CD8-positive, alpha-beta T cell (primary cell): ENCODE measurements at regions of chr11 and their contacts with region 1.

Region 1: DNA sequence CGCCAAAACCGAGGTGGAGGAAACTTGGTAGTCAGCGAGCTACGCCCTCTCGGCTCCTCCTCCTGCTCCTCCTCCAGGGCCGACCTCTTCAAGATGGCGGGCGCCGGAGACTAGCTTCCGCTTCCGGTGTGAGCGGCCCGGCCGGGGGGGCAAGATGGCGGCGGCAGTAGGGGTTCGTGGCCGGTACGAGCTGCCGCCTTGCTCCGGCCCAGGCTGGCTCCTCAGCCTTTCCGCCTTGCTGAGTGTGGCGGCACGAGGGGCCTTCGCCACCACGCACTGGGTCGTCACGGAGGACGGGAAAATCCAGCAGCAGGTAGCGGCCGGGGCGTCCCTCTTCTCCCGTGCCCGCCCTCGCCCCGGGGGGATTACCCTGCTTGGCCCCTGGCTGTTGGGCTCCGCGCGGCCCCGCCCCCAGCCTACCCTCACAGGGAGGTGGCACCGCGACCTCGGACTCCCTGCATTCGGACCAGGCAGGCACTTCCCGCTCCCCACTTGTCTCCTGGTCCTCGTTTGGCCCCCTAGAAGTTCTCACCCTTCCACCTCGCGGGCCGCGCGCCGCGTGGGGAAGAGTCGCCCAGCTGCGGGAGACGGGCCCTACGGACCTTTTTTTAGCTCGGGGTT is at the start of gene TTC17:
- DNase-seq: peak; percentile 83 to 96 (median 92)
- ATAC-seq: peak; percentile 94
- H3K4me3 ChIP-seq: peak within 1 kb of the TSS; percentile 84 to 93
- H3K4me3 Mint-ChIP-seq: peak within 1 kb of the TSS; percentile 99
- H3K27ac ChIP-seq: peak within 1 kb of the TSS; percentile 87 to 92
- H3K27ac Mint-ChIP-seq: peak within 1 kb of the TSS; percentile 98
- H3K4me1 ChIP-seq: peaks cover 17% of the 10 kb centered on the region
- H3K4me1 Mint-ChIP-seq: peaks cover 47% of the 10 kb centered on the region
- H3K27me3 ChIP-seq: no peaks in the 10 kb centered on the region
- H3K27me3 Mint-ChIP-seq: no peaks in the 10 kb centered on the region
- CTCF ChIP-seq: no peak
- total RNA-seq, gene TTC17: 84.0 to 85.6 TPM

Region 2: DNA sequence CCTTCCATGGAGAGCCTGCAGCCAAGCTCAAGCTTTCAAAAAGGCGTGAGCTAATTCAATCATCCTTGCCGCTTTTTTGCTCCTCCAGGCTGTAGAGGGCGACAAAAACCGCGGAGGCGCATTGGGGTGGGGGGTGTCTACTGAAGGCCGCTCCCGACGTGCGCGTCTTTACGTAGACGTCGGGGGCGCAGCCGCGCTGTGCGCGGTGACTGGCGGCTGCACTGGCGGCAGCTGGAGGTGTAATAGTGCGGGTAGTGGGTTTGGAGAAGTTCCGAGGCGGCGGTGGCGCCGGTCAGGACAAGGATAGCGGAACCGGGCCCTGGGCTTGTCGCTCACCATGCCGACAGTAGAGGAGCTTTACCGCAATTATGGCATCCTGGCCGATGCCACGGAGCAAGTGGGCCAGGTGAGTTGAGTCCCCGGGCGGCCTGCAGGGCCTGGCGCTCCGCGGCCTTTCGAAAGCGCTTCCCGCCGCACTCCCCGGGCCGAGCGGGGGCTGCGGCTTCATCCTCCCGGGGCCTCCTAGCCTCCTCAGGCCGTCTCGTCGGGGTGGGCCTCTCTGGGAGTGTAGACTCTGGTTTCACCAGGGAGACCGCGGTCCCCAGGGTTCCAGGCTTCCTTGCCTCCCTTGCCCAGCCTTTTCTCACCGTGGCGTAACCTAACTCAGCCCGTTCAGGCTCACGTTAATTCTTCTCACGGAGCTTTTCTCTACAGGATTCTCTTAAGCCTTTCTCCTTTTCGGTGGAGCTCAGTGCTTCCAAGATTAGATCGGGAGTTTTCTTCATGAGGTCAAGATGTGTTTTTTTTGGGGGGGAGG is 46.9 kb before region 1 on chr11 and contains the start of gene API5:
- CTCF ChIA-PET with region 1: interaction called, 8 read pairs
- POLR2A ChIA-PET with region 1: interaction called, 30 read pairs
- intact Hi-C with region 1: loop called (anchors 1 kb)
- DNase-seq: peak; percentile 84 to 96 (median 93)
- ATAC-seq: peak; percentile 94
- H3K4me3 ChIP-seq: peak within 1 kb of the TSS; percentile 84 to 85
- H3K4me3 Mint-ChIP-seq: peak within 1 kb of the TSS; percentile 92
- H3K27ac ChIP-seq: peak within 1 kb of the TSS; percentile 64 to 75
- H3K27ac Mint-ChIP-seq: peak within 1 kb of the TSS; percentile 88
- H3K4me1 ChIP-seq: peaks cover 34% of the 10 kb centered on the region
- H3K4me1 Mint-ChIP-seq: peaks cover 50% of the 10 kb centered on the region
- H3K27me3 ChIP-seq: no peaks in the 10 kb centered on the region
- H3K27me3 Mint-ChIP-seq: no peaks in the 10 kb centered on the region
- CTCF ChIP-seq: peak; percentile 63
- total RNA-seq, gene API5: 78.4 to 80.6 TPM

Region 3: GRCh38 chr11:43643898-43644620 is 285.1 kb after region 1 on chr11:
- CTCF ChIA-PET with region 1: no interaction called
- POLR2A ChIA-PET with region 1: no interaction called
- intact Hi-C with region 1: loop called (anchors 1 to 5 kb)
- DNase-seq: peak; percentile 72 to 91 (median 85)
- ATAC-seq: peak; percentile 99
- H3K4me3 ChIP-seq: peak overlapping the region; percentile 73 to 76
- H3K4me3 Mint-ChIP-seq: peak overlapping the region; percentile 84
- H3K27ac ChIP-seq: peak overlapping the region; percentile 52 to 66
- H3K27ac Mint-ChIP-seq: peak overlapping the region; percentile 91
- H3K4me1 ChIP-seq: peaks cover 8% of the 10 kb centered on the region
- H3K4me1 Mint-ChIP-seq: peaks cover 26% of the 10 kb centered on the region
- H3K27me3 ChIP-seq: no peaks in the 10 kb centered on the region
- H3K27me3 Mint-ChIP-seq: peaks cover 15% of the 10 kb centered on the region
- CTCF ChIP-seq: no peak

Region 4: GRCh38 chr11:43680521-43681400 is 321.9 kb after region 1 on chr11 and contains the start of gene HSD17B12:
- CTCF ChIA-PET with region 1: no interaction called
- POLR2A ChIA-PET with region 1: interaction called, 3 read pairs
- intact Hi-C with region 1: loop called (anchors 1 to 2 kb)
- DNase-seq: peak; percentile 98 to 100 (median 98)
- ATAC-seq: peak; percentile 94
- H3K4me3 ChIP-seq: peak within 1 kb of the TSS; percentile 84
- H3K4me3 Mint-ChIP-seq: peak within 1 kb of the TSS; percentile 89
- H3K27ac ChIP-seq: peak within 1 kb of the TSS; percentile 91 to 92
- H3K27ac Mint-ChIP-seq: peak within 1 kb of the TSS; percentile 98
- H3K4me1 ChIP-seq: peaks cover 15% of the 10 kb centered on the region
- H3K4me1 Mint-ChIP-seq: peaks cover 32% of the 10 kb centered on the region
- H3K27me3 ChIP-seq: no peaks in the 10 kb centered on the region
- H3K27me3 Mint-ChIP-seq: no peaks in the 10 kb centered on the region
- CTCF ChIP-seq: no peak
- total RNA-seq, gene HSD17B12: 13.8 to 14.0 TPM

Region 5: GRCh38 chr11:43694477-43694876 is 335.6 kb after region 1 on chr11:
- CTCF ChIA-PET with region 1: no interaction called
- POLR2A ChIA-PET with region 1: no interaction called
- intact Hi-C with region 1: no loop called
- DNase-seq: no peak
- ATAC-seq: no peak
- H3K4me3 ChIP-seq: no peak overlapping the region
- H3K4me3 Mint-ChIP-seq: no peak overlapping the region
- H3K27ac ChIP-seq: no peak overlapping the region
- H3K27ac Mint-ChIP-seq: no peak overlapping the region
- H3K4me1 ChIP-seq: no peaks in the 10 kb centered on the region
- H3K4me1 Mint-ChIP-seq: peaks cover 23% of the 10 kb centered on the region
- H3K27me3 ChIP-seq: no peaks in the 10 kb centered on the region
- H3K27me3 Mint-ChIP-seq: no peaks in the 10 kb centered on the region
- CTCF ChIP-seq: no peak

Region 6: GRCh38 chr11:45339729-45340519 is 1981.0 kb after region 1 on chr11:
- CTCF ChIA-PET with region 1: no interaction called
- POLR2A ChIA-PET with region 1: no interaction called
- intact Hi-C with region 1: loop called in 1 of 2 experiments (anchors 5 kb)
- DNase-seq: peak; percentile 81 to 96 (median 92)
- ATAC-seq: peak; percentile 100
- H3K4me3 ChIP-seq: peak overlapping the region in 1 of 2 experiments; percentile 27
- H3K4me3 Mint-ChIP-seq: peak overlapping the region; percentile 60
- H3K27ac ChIP-seq: no peak overlapping the region
- H3K27ac Mint-ChIP-seq: no peak overlapping the region
- H3K4me1 ChIP-seq: peaks cover 8% of the 10 kb centered on the region
- H3K4me1 Mint-ChIP-seq: peaks cover 10% of the 10 kb centered on the region
- H3K27me3 ChIP-seq: peaks cover 0 to 4% of the 10 kb centered on the region in 2 experiments
- H3K27me3 Mint-ChIP-seq: peaks cover 10% of the 10 kb centered on the region
- CTCF ChIP-seq: peak; percentile 87

Region 7: GRCh38 chr11:45354976-45355705 is 1996.2 kb after region 1 on chr11:
- CTCF ChIA-PET with region 1: no interaction called
- POLR2A ChIA-PET with region 1: no interaction called
- intact Hi-C with region 1: loop called in 1 of 2 experiments (anchors 2 kb)
- DNase-seq: peak; percentile 80 to 95 (median 89)
- ATAC-seq: peak; percentile 96
- H3K4me3 ChIP-seq: peak overlapping the region; percentile 66 to 72
- H3K4me3 Mint-ChIP-seq: peak overlapping the region; percentile 80
- H3K27ac ChIP-seq: peak overlapping the region; percentile 48 to 68
- H3K27ac Mint-ChIP-seq: peak overlapping the region; percentile 80
- H3K4me1 ChIP-seq: peaks cover 13% of the 10 kb centered on the region
- H3K4me1 Mint-ChIP-seq: peaks cover 14% of the 10 kb centered on the region
- H3K27me3 ChIP-seq: no peaks in the 10 kb centered on the region
- H3K27me3 Mint-ChIP-seq: peaks cover 5% of the 10 kb centered on the region
- CTCF ChIP-seq: no peak